Activated naive CD4-positive, alpha-beta T cell treated with anti-CD3 and anti-CD28 coated beads for 36 hours (primary cell): ENCODE measurements at regions of chr9 and their contacts with region 1.

Region 1: DNA sequence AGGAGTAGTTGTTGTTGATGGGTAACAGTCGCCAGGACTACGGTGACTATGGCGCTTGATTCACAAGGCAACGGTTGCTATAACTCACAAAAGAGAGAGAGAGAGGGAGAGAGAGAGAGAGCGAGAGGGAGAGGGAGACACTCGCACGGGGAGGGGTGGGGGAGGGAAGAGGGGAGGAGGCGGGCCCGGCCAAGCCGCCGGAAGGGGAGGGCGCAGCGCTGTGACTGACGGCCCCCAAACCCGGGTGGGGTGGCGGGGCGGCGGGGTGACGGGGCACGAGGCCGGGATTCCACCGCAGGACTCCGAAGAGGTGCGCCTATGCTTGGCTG is at the start of gene RFX3:
- DNase-seq: peak; percentile 94
- H3K4me3 Mint-ChIP-seq: peak within 1 kb of the TSS; percentile 93
- H3K27ac Mint-ChIP-seq: peak within 1 kb of the TSS; percentile 100
- H3K4me1 Mint-ChIP-seq: peaks cover 34% of the 10 kb centered on the region
- H3K27me3 Mint-ChIP-seq: no peaks in the 10 kb centered on the region
- total RNA-seq, gene RFX3: 11.0 to 12.7 TPM

Region 2: GRCh38 chr9:2158111-2158610 is 1367.6 kb before region 1 on chr9:
- CTCF ChIA-PET with region 1: no interaction called
- intact Hi-C with region 1: loop called (anchors 5 kb)
- DNase-seq: peak; percentile 66
- H3K4me3 Mint-ChIP-seq: peak overlapping the region; percentile 80
- H3K27ac Mint-ChIP-seq: peak overlapping the region; percentile 94
- H3K4me1 Mint-ChIP-seq: peaks cover 58% of the 10 kb centered on the region
- H3K27me3 Mint-ChIP-seq: no peaks in the 10 kb centered on the region

Region 3: DNA sequence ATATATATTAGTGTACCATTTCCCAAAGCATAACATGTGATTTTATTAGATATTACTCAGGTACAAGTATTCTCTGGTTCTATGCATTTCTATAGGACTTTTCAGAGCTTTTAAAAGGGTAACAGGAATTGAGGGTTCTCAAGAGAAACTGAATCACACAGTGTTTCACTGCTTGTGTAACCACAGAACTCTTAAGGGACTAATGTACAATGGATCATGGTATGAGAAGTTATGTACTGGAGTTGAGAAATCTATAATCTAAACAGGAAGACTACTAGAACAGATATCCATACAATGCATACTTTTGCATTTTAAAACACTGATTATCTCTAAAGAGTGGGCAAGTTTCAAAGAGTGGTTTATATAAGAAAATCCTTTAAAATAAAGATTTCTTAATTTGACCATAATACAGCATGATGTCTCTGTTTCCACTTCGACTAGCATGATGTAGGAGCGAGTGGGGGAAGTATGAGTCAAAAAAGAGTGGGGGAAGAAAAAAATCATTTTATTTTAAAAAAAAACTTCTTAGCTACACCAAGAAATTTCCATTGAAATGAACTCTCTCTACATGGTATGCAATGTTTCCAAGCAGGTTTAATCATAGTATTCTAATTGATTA is 183.5 kb before region 1 on chr9:
- CTCF ChIA-PET with region 1: no interaction called
- intact Hi-C with region 1: loop called (anchors 5 kb)
- DNase-seq: no peak
- H3K4me3 Mint-ChIP-seq: no peak overlapping the region
- H3K27ac Mint-ChIP-seq: peak overlapping the region; percentile 42
- H3K4me1 Mint-ChIP-seq: peaks cover 44% of the 10 kb centered on the region
- H3K27me3 Mint-ChIP-seq: no peaks in the 10 kb centered on the region

Region 4: GRCh38 chr9:3508521-3509291 is 17.1 kb before region 1 on chr9:
- CTCF ChIA-PET with region 1: no interaction called
- intact Hi-C with region 1: loop called (anchors 1 kb)
- DNase-seq: no peak
- H3K4me3 Mint-ChIP-seq: peak overlapping the region; percentile 51
- H3K27ac Mint-ChIP-seq: peak overlapping the region; percentile 85
- H3K4me1 Mint-ChIP-seq: peaks cover 63% of the 10 kb centered on the region
- H3K27me3 Mint-ChIP-seq: no peaks in the 10 kb centered on the region

Region 5: DNA sequence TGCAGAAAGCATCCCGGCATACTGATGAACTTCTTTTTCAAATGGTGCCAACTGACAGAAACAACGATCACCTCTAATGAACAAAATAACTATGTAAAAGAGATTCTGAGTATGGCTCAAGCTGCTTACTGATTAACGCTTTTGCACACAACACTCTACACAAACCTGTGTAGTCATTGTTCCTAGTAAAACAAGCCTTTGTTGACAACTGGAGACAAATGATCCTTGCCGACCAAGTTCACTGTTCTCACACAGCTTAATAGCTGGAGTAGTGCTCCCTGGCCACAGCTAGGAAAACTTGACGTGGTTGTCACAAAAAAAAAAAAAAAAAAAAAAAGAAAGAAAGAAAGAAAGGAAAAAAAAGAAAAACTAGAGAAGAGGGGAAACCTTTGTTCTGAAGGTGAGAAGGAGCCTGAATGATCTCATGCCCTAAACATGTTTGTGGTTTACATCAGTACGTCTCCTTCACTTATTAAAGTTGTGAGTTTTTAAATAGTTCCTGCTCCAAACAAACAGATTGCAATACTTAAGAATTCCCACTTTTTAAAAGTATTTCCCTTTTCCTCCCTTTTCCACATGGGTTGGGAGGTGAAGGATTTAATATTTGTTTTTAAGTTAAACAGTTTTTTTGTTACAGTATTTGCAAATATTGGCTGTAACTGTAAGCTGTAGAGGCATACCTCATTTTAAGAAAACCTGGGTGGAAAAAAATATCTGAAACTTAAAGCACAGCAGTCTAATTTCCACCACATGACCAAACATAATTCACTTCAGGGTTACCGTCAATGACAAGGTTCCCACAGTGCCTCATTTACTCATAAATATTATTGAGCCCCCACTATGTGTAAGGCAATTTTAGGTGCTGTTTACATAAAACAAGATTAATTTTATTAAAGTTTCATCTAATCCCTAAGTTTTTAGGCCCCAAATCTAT is 710.3 kb after region 1 on chr9:
- CTCF ChIA-PET with region 1: no interaction called
- intact Hi-C with region 1: loop called (anchors 1 kb)
- DNase-seq: no peak
- H3K4me3 Mint-ChIP-seq: no peak overlapping the region
- H3K27ac Mint-ChIP-seq: no peak overlapping the region
- H3K4me1 Mint-ChIP-seq: peaks cover 23% of the 10 kb centered on the region
- H3K27me3 Mint-ChIP-seq: no peaks in the 10 kb centered on the region

Region 6: DNA sequence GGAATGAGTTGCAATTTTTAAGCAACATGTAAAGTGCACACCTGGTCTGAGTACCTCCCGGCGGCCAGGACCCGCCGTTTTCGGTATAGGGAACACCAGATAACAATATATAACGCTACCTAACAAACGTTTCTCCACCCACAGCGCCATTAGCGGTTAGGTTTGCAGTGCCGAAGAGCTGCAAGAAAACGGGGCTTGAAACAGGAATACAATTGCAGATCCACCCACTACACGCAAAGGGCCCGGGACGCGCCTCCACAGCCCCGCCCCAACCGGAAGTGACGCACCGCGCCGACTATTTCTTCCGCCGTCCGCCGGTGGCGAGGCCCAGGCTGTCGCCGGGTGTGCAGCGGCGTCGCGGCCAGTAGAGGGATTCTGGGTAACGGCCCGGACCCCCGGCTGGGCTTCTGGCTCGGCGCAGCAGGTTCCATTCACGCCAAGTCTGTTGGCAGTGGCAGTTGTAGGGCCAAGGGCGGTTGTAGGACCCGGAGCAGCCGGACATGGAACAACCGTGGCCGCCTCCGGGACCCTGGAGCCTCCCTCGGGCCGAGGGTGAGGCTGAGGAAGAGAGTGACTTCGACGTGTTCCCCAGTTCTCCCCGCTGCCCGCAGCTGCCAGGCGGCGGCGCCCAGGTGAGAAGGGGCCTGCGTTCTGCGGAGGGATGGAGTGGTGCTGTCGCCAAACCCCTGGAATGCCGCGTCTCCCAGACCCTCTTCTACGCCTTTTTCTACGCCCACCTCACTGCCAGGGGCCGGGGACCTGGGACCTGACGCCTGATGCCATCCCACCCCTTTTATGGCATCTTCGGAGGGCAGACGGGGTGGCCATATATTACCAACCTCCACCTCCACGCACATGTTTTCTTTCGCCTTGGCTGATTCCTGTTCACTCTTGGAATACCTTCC is 1153.7 kb after region 1 on chr9 and contains the start of gene CDC37L1:
- CTCF ChIA-PET with region 1: no interaction called
- intact Hi-C with region 1: loop called (anchors 1 kb)
- DNase-seq: peak; percentile 99
- H3K4me3 Mint-ChIP-seq: no peak within 1 kb of the TSS
- H3K27ac Mint-ChIP-seq: no peak within 1 kb of the TSS
- H3K4me1 Mint-ChIP-seq: peaks cover 17% of the 10 kb centered on the region
- H3K27me3 Mint-ChIP-seq: no peaks in the 10 kb centered on the region
- total RNA-seq, gene CDC37L1: 13.7 to 14.5 TPM

Region 7: DNA sequence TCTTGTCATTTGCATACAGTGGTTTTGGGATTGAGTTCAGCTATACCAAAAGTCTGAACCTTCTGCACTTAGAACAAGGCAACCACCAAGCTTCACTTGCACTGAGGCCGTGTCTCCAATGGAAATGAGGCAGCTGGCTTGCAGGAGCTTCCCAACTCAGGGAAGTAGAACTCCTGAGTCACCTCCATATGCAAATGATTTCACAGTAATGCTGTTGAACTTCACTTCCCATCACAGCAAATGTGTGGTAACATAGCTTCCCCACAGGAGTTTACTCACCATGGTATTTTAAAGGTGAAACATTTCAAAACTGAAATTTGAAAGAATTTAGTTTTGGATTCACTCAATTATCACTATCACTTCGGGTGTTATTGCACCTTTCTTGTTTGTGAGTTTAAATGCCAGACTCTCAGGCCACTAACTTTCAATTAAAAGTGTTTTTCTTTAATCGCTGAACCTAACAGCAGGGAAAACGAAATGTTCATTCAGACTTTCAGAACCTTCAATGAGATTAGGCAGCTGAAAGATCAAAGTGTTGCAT is 1933.6 kb after region 1 on chr9:
- CTCF ChIA-PET with region 1: no interaction called
- intact Hi-C with region 1: loop called (anchors 5 kb)
- DNase-seq: peak; percentile 61
- H3K4me3 Mint-ChIP-seq: peak overlapping the region; percentile 57
- H3K27ac Mint-ChIP-seq: peak overlapping the region; percentile 84
- H3K4me1 Mint-ChIP-seq: peaks cover 65% of the 10 kb centered on the region
- H3K27me3 Mint-ChIP-seq: no peaks in the 10 kb centered on the region